Mammary epithelial cell (primary cell): ENCODE measurements at regions of chr2 and their contacts with region 1.

Region 1: DNA sequence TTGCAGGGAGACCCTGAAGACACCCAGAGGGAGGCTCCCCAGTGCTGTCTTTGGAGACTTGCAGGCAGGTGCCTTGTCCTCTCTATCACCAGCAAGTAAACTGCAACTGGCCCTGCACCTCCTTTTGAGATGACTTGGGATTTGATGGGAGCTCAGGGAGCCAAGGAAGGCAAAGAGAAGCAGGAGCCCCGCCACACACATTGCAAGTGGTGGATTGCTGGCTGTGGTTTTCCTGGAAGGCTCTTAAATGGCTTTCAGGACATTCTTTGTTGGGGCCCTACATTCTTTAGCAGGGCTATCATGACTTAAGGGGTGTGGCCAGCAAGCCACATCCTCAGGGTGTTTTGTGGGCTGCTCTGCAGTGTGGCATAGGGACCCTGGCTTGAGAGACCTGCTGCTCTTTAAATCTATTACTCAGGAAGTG is 39.9 kb upstream of the CDC42EP3 start:
- DNase-seq: peak; percentile 73
- H3K4me3 ChIP-seq: peak overlapping the region in 1 of 3 experiments; percentile 9
- H3K27ac ChIP-seq: peak overlapping the region; percentile 52
- H3K4me1 ChIP-seq: peaks cover 24% of the 10 kb centered on the region
- H3K27me3 ChIP-seq: no peaks in the 10 kb centered on the region
- CTCF ChIP-seq: no peak

Region 2: GRCh38 chr2:37688771-37689468 is 22.4 kb before region 1 on chr2:
- CTCF ChIA-PET with region 1: no interaction called
- dilution Hi-C with region 1: no loop called
- in situ Hi-C with region 1: no loop called
- intact Hi-C with region 1: loop called (anchors 1 kb)
- DNase-seq: peak; percentile 78
- H3K4me3 ChIP-seq: no peak overlapping the region
- H3K27ac ChIP-seq: peak overlapping the region; percentile 76
- H3K4me1 ChIP-seq: peaks cover 24% of the 10 kb centered on the region
- H3K27me3 ChIP-seq: no peaks in the 10 kb centered on the region
- CTCF ChIP-seq: no peak

Region 3: GRCh38 chr2:37767956-37768925 is 56.9 kb after region 1 on chr2:
- CTCF ChIA-PET with region 1: no interaction called
- dilution Hi-C with region 1: no loop called
- in situ Hi-C with region 1: no loop called
- intact Hi-C with region 1: loop called (anchors 5 kb)
- DNase-seq: peak; percentile 66
- H3K4me3 ChIP-seq: no peak overlapping the region
- H3K27ac ChIP-seq: peak overlapping the region; percentile 27
- H3K4me1 ChIP-seq: peaks cover 31% of the 10 kb centered on the region
- H3K27me3 ChIP-seq: no peaks in the 10 kb centered on the region
- CTCF ChIP-seq: no peak

Region 4: GRCh38 chr2:37809525-37809924 is 98.2 kb after region 1 on chr2:
- CTCF ChIA-PET with region 1: no interaction called
- dilution Hi-C with region 1: no loop called
- in situ Hi-C with region 1: no loop called
- intact Hi-C with region 1: loop called (anchors 2 kb)
- DNase-seq: peak; percentile 42
- H3K4me3 ChIP-seq: no peak overlapping the region
- H3K27ac ChIP-seq: no peak overlapping the region
- H3K4me1 ChIP-seq: no peaks in the 10 kb centered on the region
- H3K27me3 ChIP-seq: no peaks in the 10 kb centered on the region
- CTCF ChIP-seq: peak; percentile 63 to 65

Region 5: DNA sequence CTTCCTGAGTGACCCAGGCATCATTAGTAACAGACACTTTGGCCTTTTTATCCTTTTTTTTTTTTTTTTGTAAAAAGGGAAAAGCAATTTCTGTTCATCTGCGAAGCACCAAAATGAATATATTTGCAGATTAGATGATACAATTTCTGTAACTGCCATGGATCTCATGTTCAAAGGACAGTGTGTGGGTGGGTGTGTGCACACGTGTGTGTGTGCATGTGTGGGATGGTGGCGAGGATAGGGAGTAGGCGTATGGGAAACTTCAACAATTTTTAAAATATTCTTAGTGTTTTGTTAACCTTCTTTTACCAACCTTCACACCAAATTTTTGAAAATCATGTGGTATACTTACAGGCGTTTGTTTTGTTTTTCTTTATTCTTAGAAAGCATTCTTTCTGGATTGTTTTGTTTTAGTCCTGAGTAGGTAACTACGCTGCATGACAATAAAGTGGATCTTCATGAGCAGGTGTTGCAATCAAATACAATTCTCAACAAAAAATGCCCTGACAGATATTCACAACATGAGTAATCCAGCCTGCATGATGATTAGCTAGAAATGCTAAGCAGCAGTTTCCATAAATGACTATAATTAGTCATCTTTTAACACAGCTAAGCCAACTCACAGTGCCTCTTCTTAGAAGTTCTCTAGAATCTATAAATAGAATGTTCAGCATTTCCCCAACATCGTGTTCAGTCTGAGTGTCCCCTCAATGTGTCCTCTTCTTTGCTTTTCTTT is 160.3 kb after region 1 on chr2:
- CTCF ChIA-PET with region 1: no interaction called
- dilution Hi-C with region 1: no loop called
- in situ Hi-C with region 1: no loop called
- intact Hi-C with region 1: loop called (anchors 5 kb)
- DNase-seq: peak; percentile 87
- H3K4me3 ChIP-seq: no peak overlapping the region
- H3K27ac ChIP-seq: peak overlapping the region; percentile 21
- H3K4me1 ChIP-seq: peaks cover 33% of the 10 kb centered on the region
- H3K27me3 ChIP-seq: no peaks in the 10 kb centered on the region
- CTCF ChIP-seq: no peak